A673 (cell line): ENCODE measurements at regions of chr10 and their contacts with region 1.

Region 1: GRCh38 chr10:89793649-89794254 is 92.4 kb downstream of the KIF20B start:
- DNase-seq: peak; percentile 78
- H3K4me3 ChIP-seq: no peak overlapping the region
- H3K27ac ChIP-seq: no peak overlapping the region
- H3K4me1 ChIP-seq: no peaks in the 10 kb centered on the region
- H3K27me3 ChIP-seq: peaks cover 1% of the 10 kb centered on the region
- CTCF ChIP-seq: peak; percentile 85

Region 2: GRCh38 chr10:90138844-90139243 is 345.1 kb after region 1 on chr10:
- CTCF ChIA-PET with region 1: no interaction called
- POLR2A ChIA-PET with region 1: no interaction called
- intact Hi-C with region 1: loop called (anchors 5 kb)
- DNase-seq: no peak
- H3K4me3 ChIP-seq: no peak overlapping the region
- H3K27ac ChIP-seq: no peak overlapping the region
- H3K4me1 ChIP-seq: no peaks in the 10 kb centered on the region
- H3K27me3 ChIP-seq: no peaks in the 10 kb centered on the region
- CTCF ChIP-seq: peak; percentile 29; the same call in 1 of the 2 replicates

Region 3: GRCh38 chr10:90598513-90598912 is 804.8 kb after region 1 on chr10:
- CTCF ChIA-PET with region 1: no interaction called
- POLR2A ChIA-PET with region 1: no interaction called
- intact Hi-C with region 1: loop called (anchors 5 kb)
- DNase-seq: no peak
- H3K4me3 ChIP-seq: no peak overlapping the region
- H3K27ac ChIP-seq: no peak overlapping the region
- H3K4me1 ChIP-seq: no peaks in the 10 kb centered on the region
- H3K27me3 ChIP-seq: peaks cover 25% of the 10 kb centered on the region
- CTCF ChIP-seq: no peak

Region 4: GRCh38 chr10:90787393-90788198 is 993.8 kb after region 1 on chr10:
- CTCF ChIA-PET with region 1: no interaction called
- POLR2A ChIA-PET with region 1: no interaction called
- intact Hi-C with region 1: loop called (anchors 2 kb)
- DNase-seq: peak; percentile 40
- H3K4me3 ChIP-seq: no peak overlapping the region
- H3K27ac ChIP-seq: no peak overlapping the region
- H3K4me1 ChIP-seq: no peaks in the 10 kb centered on the region
- H3K27me3 ChIP-seq: peaks cover 80% of the 10 kb centered on the region
- CTCF ChIP-seq: peak; percentile 85

Region 5: DNA sequence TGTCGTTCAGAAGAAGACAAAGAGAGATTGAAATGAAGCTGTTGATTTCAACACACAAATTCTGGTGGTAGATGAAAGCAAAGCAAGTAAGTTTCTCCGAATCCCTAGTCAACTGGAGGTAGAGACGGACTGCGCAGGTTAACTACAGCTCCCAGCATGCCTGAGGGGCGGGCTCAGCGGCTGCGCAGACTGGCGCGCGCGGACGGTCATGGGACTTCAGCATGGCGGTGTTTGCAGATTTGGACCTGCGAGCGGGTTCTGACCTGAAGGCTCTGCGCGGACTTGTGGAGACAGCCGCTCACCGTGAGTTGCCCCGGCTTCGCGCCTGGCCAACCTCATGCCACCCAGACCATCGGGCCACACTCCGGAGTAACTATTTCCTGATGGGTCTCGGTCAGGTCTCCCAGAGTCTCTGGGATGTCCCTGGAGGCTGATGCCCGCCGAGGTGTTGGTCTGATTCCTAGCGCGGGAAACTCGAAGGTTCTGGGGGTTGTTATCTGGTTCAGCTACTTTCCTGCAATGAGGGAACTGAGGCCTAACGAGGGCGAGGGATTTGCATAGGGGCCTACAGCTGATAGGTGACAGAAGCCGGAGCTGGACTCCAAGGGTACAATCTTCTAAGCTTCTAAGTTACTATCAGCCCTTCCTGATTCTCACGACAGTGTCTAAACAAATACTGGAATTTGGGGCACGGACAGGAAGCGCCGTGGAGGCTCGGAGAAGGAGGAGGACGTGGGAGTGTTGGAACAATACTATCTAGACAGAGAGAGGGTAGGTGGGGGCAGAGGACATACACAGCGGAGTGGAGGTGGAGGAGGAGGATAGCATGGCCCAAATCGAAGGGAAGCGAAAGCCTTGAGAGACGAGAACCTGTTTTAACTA is 1078.3 kb after region 1 on chr10 and contains the start of gene RPP30:
- CTCF ChIA-PET with region 1: no interaction called
- POLR2A ChIA-PET with region 1: no interaction called
- intact Hi-C with region 1: loop called (anchors 2 kb)
- DNase-seq: peak; percentile 87
- H3K4me3 ChIP-seq: peak within 1 kb of the TSS; percentile 87
- H3K27ac ChIP-seq: peak within 1 kb of the TSS; percentile 66
- H3K4me1 ChIP-seq: peaks cover 10% of the 10 kb centered on the region
- H3K27me3 ChIP-seq: peaks cover 11% of the 10 kb centered on the region
- CTCF ChIP-seq: no peak
- total RNA-seq, gene RPP30: 65.8 and 74.5 TPM in 2 replicates